ENCODE measurements at regions of chr3 and their contacts with region 1.

Region 1: GRCh38 chr3:29759411-29760225 is 478.7 kb downstream of the RBMS3 start:
- DNase-seq: no peak
- ATAC-seq: peak; percentile 45

Region 2: DNA sequence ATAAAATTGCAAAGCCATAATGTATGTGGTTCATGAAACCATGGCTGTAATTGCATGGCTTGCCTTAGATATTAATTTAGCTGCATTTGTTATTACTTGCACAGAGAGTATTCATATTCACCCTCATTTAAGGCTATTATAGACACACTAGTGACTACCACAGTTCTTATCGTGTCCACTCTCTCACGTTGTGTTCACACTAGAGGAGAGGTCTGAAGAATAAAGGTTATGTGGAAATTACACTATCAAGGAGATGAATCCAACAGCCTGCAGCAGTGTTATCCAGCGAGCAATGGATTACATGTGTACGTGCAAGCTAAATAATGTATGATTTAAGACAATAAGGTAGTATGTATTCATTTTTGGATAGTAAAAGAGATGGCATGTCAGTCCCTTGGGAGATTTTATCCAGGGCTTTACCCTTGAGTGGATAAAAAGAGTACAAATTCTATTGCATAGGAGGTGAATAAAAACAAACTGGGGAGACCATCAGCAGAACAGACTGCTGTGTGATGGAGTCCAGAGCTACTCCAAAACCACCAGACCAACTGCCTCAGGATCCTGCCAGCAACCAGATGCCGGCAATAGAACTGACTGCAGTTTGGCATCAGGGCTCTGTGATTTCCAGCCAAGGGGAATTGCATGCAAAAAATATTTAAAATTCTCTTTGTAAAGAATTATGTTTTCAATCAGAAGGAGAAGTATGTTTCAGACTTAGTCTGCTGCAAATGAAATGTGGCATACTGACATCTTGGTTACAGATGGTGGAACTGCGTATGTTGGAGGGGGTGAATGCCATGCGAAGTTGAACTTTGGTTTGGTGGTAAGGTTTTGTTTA is 332.1 kb before region 1 on chr3:
- intact Hi-C with region 1: loop called (anchors 10 kb)
- DNase-seq: no peak
- ATAC-seq: peak; percentile 81

Region 3: DNA sequence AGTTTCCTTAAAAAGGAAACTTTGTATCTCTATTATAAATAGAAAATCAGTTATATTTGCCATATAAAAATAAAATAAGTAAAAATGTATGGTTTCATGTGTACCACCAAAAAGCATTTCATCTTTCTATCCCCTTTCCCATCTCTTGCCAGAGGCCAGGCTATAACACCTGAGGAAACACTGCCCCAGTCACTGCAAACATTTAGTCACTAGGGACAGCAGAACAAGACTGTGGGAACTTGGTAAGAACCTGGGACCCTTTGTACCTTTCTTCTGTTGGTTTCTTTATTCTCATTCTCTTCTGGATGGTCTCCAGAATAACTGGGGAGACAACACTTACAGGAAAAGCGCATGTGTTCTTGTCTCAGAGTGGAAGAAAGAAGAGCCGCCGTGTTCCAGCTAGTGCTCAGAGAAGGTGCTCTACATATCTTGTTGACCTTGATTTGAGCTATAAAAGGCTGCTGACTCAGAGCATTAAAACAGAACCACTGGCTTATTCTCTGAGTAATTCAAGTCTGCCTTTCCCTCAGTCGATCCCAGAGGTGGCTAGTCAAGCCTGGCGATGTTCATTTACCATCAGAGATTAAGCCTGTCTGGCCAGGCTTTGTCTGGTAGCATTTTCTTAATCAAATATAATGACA is 117.1 kb before region 1 on chr3:
- intact Hi-C with region 1: loop called (anchors 5 kb)
- DNase-seq: peak; percentile 45
- ATAC-seq: peak; percentile 87

Region 4: DNA sequence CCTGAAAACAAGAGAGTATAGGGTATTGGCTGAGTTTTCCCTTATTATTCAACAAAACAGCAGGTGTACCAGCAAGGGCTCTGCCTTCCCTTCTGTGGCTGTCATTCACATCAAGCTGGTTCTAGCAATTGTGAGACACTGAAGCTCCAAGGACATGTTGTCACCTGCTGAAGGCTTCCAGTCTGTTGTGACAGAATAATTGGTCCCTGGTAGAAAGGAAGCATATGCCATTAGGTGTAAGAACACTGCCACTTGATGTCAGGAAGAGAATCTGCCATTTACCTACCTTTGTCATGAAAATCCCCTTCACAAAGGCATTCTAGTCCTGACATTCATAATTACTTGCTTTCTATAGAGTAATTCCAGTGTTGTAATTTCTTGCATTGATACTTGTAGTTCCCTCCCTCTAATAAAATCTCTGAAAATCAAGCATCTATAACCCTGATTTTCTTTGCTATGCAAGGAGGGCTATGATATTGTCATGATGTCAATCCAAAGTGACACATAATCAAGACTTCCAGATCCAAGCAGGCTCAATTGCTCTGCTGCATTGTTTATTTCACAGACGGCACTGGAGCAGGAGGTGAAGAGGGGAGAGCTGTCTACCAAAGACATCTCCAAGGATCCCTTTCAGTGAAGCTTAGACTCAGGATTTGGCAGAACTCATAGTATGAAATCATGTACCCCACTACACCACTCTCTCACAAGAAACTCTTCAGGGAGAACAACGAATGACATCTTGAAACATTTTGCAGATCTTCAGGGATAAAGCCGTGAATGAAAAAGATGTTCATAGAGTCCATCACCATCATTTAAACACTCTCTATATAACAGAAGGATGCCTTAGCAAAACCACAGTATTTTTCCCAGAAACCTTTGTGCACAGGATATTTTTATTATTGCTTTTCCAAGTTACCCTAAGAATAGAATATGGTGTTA is 53.4 kb before region 1 on chr3:
- intact Hi-C with region 1: loop called (anchors 5 kb)
- DNase-seq: no peak
- ATAC-seq: no peak

Measured in Right ventricle myocardium inferior (tissue), 1 donor.